ENCODE measurements at regions of chr12 and their contacts with region 1.

Region 1: DNA sequence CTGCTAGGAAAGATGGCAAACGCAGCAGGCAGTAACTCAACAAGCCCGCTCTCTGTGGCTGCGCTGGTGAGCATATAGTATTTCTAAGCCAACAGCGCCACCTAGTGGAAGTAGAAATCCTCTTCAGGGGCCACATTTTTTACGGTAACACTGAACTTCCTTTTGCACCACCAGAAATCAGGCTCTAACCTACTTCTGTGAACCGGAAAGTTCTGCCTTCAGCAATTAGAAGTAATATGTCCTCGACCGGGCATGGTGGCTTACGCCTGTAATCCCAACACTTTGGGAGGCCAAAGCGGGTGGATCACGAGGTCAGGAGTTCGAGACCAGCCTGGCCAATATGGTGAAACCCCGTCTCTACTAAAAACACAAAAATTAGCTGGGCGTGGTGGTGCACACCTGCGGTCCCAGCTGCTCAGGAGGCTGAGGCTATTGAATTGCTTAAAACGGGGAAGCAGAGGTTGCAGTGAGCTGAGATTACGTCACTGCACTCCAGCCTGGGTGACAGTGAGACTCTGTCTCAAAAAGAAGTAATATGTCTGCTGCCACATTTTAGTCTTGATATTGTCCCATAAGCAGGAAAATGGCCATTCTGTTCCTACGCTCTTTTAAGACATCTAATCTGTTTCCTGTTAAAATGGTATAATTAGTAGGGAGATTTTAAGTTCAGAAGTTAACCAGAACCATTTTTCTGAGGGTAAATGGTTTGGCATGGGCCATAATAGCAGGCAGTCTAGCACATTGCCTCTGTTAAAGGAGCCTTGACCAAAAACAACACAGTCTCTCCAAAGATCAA is 26.8 kb downstream of the APOBEC1 start:
- DNase-seq: peak; percentile 63 to 83
- ATAC-seq: peak; percentile 96 to 97
- H3K4me3 ChIP-seq: no peak overlapping the region
- H3K27ac ChIP-seq: no peak overlapping the region
- H3K4me1 ChIP-seq: no peaks in the 10 kb centered on the region
- CTCF ChIP-seq: peak; percentile 91
- EP300 ChIP-seq: no peak
- POLR2A ChIP-seq: no peak
- RAD21 ChIP-seq: peak; percentile 95 to 96

Region 2: DNA sequence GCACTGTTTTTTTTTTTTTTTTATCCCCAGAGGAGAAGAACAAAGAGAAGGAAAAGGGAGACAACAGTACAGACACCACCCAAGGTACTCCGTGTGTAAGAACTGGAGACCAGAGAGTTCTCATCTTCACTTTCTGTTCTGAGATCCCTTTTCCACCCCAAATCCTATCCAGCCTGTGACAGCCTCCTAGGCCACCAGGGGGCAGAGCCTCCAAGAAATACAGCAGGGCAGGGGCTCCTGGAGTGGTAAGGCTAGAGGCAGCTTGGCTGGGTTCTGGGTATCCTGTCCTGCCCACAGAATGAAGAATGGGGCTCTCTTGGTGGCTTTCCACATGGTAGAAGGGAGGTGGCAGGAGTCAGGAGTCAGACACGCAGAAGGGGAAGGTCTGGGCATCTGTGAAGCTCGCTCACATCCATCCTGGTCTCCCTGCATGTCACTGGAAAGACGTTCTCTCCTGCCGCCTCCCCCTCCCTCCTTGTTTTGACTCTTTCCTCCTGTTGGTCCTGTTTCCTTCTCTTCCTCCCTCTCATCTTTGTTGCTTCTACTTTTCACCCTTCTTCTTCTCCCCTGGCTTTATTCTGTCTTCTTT is 496.8 kb before region 1 on chr12:
- CTCF ChIA-PET with region 1: interaction called, 10 read pairs
- POLR2A ChIA-PET with region 1: no interaction called
- DNase-seq: peak; percentile 59 to 87
- ATAC-seq: peak; percentile 88 to 94
- H3K4me3 ChIP-seq: no peak overlapping the region
- H3K27ac ChIP-seq: no peak overlapping the region
- H3K4me1 ChIP-seq: no peaks in the 10 kb centered on the region
- CTCF ChIP-seq: peak; percentile 64
- EP300 ChIP-seq: no peak
- POLR2A ChIP-seq: no peak
- RAD21 ChIP-seq: peak in 1 of 2 experiments; percentile 56; a peak in 3 of 5 replicates

Region 3: GRCh38 chr12:7219599-7220243 is 419.2 kb before region 1 on chr12:
- CTCF ChIA-PET with region 1: interaction called, 35 read pairs
- POLR2A ChIA-PET with region 1: no interaction called
- DNase-seq: peak; percentile 47 to 83
- ATAC-seq: peak; percentile 83 to 86; a peak in 5 of 6 replicates
- H3K4me3 ChIP-seq: no peak overlapping the region
- H3K27ac ChIP-seq: no peak overlapping the region
- H3K4me1 ChIP-seq: no peaks in the 10 kb centered on the region
- CTCF ChIP-seq: peak; percentile 93
- EP300 ChIP-seq: no peak
- POLR2A ChIP-seq: no peak
- RAD21 ChIP-seq: peak; percentile 96 to 99

Region 4: DNA sequence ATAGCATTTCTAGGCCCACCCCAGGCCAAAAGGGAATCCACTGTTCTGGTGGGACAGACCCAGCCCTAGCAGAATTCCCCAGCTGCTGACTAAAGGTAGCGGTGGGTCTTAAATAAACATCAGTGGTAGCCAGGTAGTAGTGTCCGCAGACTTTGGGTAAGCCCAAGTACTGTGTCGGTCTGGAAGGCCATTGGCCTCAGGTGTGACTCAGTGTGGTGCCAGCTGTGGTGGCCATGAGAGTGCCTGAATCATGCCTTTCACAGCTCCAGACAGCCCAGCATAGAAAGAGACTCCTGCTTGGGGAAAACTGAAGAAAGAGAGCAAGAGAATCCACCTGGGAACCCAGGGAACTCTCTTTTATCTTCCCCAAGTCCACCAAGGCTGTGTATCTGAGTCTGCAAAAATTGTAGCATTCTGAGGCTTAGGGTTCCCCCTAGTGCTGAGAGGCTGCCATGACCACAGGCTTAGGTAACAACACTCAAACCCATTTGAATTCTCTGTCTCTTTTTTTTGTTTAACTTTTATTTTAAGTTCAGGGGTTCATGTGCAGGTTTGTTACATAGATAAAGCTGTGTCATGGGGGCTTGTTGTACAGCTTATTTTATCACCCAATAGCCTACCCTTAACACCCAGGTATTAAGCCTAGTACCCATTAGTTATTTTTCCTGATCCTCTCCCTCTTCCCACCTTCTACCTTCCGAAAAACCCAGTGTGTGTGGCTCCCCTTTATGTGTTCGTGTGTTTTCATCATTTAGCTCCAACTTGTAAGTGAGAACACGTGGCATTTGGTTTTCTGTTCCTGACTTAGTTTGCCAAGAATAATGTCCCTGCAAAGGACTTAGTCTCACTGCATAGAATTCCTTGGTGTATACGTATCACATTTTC is 178.3 kb before region 1 on chr12:
- CTCF ChIA-PET with region 1: interaction called, 19 read pairs
- POLR2A ChIA-PET with region 1: no interaction called
- DNase-seq: peak; percentile 66
- ATAC-seq: peak; percentile 97 to 99
- H3K4me3 ChIP-seq: no peak overlapping the region
- H3K27ac ChIP-seq: no peak overlapping the region
- H3K4me1 ChIP-seq: no peaks in the 10 kb centered on the region
- CTCF ChIP-seq: peak; percentile 93
- EP300 ChIP-seq: no peak
- POLR2A ChIP-seq: no peak
- RAD21 ChIP-seq: peak; percentile 95 to 98

Region 5: DNA sequence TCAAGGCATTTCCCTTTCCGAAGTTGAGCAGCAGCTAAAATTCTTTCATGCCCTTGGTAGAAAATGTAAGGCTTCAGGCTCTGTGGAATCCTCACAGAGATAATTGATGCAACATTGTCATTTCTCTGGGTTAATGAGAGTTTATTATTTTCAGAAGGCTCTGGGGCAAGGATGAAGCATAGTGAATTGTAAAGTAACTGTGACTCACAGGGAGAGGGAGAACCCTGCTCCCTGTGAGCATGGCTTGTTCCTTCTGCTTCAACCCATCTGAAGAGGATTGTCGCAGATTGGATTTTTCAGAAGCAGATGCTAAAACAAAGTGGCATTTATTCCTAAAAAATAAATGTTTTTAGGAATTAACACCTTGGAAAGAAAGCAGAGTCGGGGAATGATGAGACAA is 14.5 kb before region 1 on chr12:
- CTCF ChIA-PET with region 1: interaction called, 12 read pairs
- POLR2A ChIA-PET with region 1: no interaction called
- DNase-seq: no peak
- ATAC-seq: no peak
- H3K4me3 ChIP-seq: no peak overlapping the region
- H3K27ac ChIP-seq: no peak overlapping the region
- H3K4me1 ChIP-seq: no peaks in the 10 kb centered on the region
- CTCF ChIP-seq: no peak
- EP300 ChIP-seq: no peak
- POLR2A ChIP-seq: no peak
- RAD21 ChIP-seq: no peak

Region 6: DNA sequence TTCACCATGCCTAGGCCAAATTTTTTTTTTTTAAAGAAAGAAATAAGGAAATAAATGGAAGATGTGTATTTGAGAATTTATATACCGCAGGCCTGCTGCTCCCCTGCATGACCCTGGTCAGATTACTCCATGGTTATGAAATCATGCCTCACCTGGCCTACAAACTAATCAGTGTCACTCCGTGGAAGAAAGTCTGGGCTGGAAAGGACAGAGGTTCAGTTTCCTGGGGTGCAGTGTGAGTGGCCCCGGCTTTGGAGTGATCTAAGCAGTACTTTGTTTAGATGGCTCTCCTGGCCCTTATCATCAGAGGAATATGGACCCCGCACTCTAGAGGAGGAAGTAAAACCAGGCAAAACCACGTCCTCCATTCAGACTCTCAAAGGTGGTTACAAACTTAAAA is 17.2 kb after region 1 on chr12:
- CTCF ChIA-PET with region 1: interaction called, 23 read pairs
- POLR2A ChIA-PET with region 1: no interaction called
- DNase-seq: no peak
- ATAC-seq: no peak
- H3K4me3 ChIP-seq: no peak overlapping the region
- H3K27ac ChIP-seq: no peak overlapping the region
- H3K4me1 ChIP-seq: no peaks in the 10 kb centered on the region
- CTCF ChIP-seq: no peak
- EP300 ChIP-seq: no peak
- POLR2A ChIP-seq: no peak
- RAD21 ChIP-seq: no peak

Region 7: DNA sequence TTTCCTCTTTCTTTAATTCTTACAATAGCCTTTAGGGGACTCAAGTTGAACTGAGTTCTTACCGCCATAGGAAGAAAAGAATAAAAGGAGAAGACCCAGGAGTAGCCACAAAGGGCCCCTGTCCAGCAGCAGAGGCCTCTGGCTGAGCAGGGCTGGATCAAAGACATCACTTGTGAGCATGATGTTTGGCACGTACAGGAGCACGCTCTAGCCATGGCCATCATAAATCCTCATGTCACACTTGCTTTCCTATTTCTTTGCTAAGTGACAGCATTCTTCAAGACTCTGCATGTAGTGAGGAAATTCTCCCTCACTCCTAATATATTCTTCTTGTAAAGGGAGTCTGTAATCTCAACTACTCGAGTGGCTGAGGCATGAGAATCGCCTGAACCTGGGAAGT is 92.5 kb after region 1 on chr12:
- CTCF ChIA-PET with region 1: no interaction called
- POLR2A ChIA-PET with region 1: no interaction called
- DNase-seq: no peak
- ATAC-seq: peak in 1 of 2 experiments; percentile 39; a peak in 2 of 6 replicates
- H3K4me3 ChIP-seq: no peak overlapping the region
- H3K27ac ChIP-seq: no peak overlapping the region
- H3K4me1 ChIP-seq: no peaks in the 10 kb centered on the region
- CTCF ChIP-seq: no peak
- EP300 ChIP-seq: no peak
- POLR2A ChIP-seq: no peak
- RAD21 ChIP-seq: no peak

Region 8: GRCh38 chr12:7806863-7807487 is 168.0 kb after region 1 on chr12:
- CTCF ChIA-PET with region 1: interaction called, 19 read pairs
- POLR2A ChIA-PET with region 1: no interaction called
- DNase-seq: peak; percentile 75 to 78
- ATAC-seq: peak; percentile 98
- H3K4me3 ChIP-seq: no peak overlapping the region
- H3K27ac ChIP-seq: no peak overlapping the region
- H3K4me1 ChIP-seq: no peaks in the 10 kb centered on the region
- CTCF ChIP-seq: peak; percentile 87
- EP300 ChIP-seq: no peak
- POLR2A ChIP-seq: no peak
- RAD21 ChIP-seq: peak; percentile 81 to 88